ENCODE measurements at regions of chr18 and their contacts with region 1.

Region 1: DNA sequence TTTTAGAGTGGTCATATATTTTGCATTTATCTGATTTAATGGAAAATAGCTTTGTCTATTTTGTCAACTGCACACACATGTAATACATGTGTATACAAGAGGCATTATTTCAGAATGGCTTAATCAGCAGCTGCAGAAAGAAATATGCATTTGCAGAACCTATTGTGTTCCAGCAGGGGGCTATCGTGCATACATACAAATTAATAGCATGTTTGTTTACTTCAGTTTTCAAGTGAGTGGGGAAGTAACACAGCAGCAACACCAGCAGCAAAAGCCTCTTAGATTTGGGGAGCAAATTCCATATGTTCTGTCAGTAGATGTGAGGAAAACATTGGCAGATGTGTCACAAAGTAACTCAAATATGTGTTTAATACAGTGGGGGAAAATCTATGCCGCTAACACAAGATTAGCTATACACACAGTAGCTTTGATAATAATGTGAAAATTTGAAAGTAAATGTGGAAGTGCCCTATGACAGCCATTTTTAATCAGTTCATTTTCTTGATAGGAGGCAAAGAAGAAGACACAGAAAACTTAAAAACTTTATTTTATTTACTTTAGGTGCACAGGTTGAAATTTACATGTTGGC is 218.1 kb downstream of the WDR7 start:
- DNase-seq: no peak
- H3K4me3 Mint-ChIP-seq: no peak overlapping the region
- H3K27ac Mint-ChIP-seq: no peak overlapping the region
- H3K4me1 Mint-ChIP-seq: no peaks in the 10 kb centered on the region
- H3K27me3 Mint-ChIP-seq: no peaks in the 10 kb centered on the region

Region 2: DNA sequence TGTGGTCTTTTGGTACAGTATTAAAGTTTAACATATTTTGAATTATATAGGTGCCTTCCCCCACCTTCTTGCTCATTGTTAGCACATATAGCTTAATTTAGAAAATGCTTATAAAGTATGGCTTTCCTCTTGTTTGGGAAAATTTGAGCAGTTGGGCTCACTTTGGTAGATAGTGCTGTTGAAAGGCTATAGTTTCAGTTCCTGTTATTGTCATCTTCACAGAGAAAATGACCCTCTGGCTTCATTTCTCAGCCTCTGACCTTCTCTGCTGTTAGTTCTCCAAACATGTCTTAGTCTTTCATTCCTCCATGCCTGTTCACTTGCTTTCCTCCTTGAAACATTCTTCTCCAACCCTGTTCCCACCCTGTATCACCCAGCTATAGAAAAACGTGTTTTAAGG is 17.5 kb before region 1 on chr18:
- intact Hi-C with region 1: no loop called
- DNase-seq: no peak
- H3K4me3 Mint-ChIP-seq: no peak overlapping the region
- H3K27ac Mint-ChIP-seq: no peak overlapping the region
- H3K4me1 Mint-ChIP-seq: no peaks in the 10 kb centered on the region
- H3K27me3 Mint-ChIP-seq: peaks cover 3% of the 10 kb centered on the region

Region 3: GRCh38 chr18:57015451-57015850 is 146.2 kb after region 1 on chr18:
- intact Hi-C with region 1: loop called (anchors 5 kb)
- DNase-seq: no peak
- H3K4me3 Mint-ChIP-seq: no peak overlapping the region
- H3K27ac Mint-ChIP-seq: no peak overlapping the region
- H3K4me1 Mint-ChIP-seq: peaks cover 19% of the 10 kb centered on the region
- H3K27me3 Mint-ChIP-seq: no peaks in the 10 kb centered on the region